ENCODE measurements at regions of chr15 and their contacts with region 1.

Region 1: GRCh38 chr15:34367101-34368081 is at the start of gene LPCAT4:
- DNase-seq: peak; percentile 65
- ATAC-seq: peak; percentile 86
- H3K4me3 ChIP-seq: peak within 1 kb of the TSS; percentile 86
- H3K27ac ChIP-seq: peak within 1 kb of the TSS; percentile 96
- H3K4me1 ChIP-seq: peaks cover 34% of the 10 kb centered on the region
- H3K27me3 ChIP-seq: no peaks in the 10 kb centered on the region
- CTCF ChIP-seq: peak; percentile 89 to 96 (median 95); a peak in 5 of 6 replicates
- EP300 ChIP-seq: no peak
- POLR2A ChIP-seq: peak; percentile 76; the same call in 1 of the 2 replicates
- RAD21 ChIP-seq: peak; percentile 61
- polyA plus RNA-seq, gene LPCAT4: 14.4 to 17.2 TPM

Region 2: GRCh38 chr15:33756961-33757360 is 610.4 kb before region 1 on chr15:
- CTCF ChIA-PET with region 1: no interaction called
- POLR2A ChIA-PET with region 1: no interaction called
- RAD21 ChIA-PET with region 1: no interaction called
- SMC1A ChIA-PET with region 1: no interaction called
- in situ Hi-C with region 1: no loop called
- intact Hi-C with region 1: no loop called
- DNase-seq: no peak
- ATAC-seq: no peak
- H3K4me3 ChIP-seq: no peak overlapping the region
- H3K27ac ChIP-seq: no peak overlapping the region
- H3K4me1 ChIP-seq: no peaks in the 10 kb centered on the region
- H3K27me3 ChIP-seq: no peaks in the 10 kb centered on the region
- CTCF ChIP-seq: no peak
- EP300 ChIP-seq: no peak
- POLR2A ChIP-seq: no peak
- RAD21 ChIP-seq: no peak

Region 3: GRCh38 chr15:34101366-34102175 is 265.8 kb before region 1 on chr15 and contains the starts of genes EMC7 and PGBD4:
- CTCF ChIA-PET with region 1: no interaction called
- POLR2A ChIA-PET with region 1: no interaction called
- RAD21 ChIA-PET with region 1: interaction called, 4 read pairs
- SMC1A ChIA-PET with region 1: interaction called, 3 read pairs
- in situ Hi-C with region 1: no loop called
- intact Hi-C with region 1: loop called (anchors 5 kb)
- DNase-seq: peak; percentile 97
- ATAC-seq: peak; percentile 98
- H3K4me3 ChIP-seq: peak within 1 kb of the TSS; percentile 92
- H3K27ac ChIP-seq: peak within 1 kb of the TSS; percentile 77
- H3K4me1 ChIP-seq: 0 out of 2 replicates have a peak, but pooled peaks cover 4% of the 10 kb centered on the region
- H3K27me3 ChIP-seq: no peaks in the 10 kb centered on the region
- CTCF ChIP-seq: no peak
- EP300 ChIP-seq: peak in 1 of 2 experiments; percentile 10; a peak in 1 of 4 replicates
- POLR2A ChIP-seq: peak; percentile 97
- RAD21 ChIP-seq: no peak
- polyA plus RNA-seq, gene EMC7: 16.5 to 49.3 TPM
- polyA plus RNA-seq, gene PGBD4: 1.2 to 1.6 TPM

Region 4: GRCh38 chr15:34209421-34210282 is 157.7 kb before region 1 on chr15 and contains the start of gene KATNBL1:
- CTCF ChIA-PET with region 1: interaction called, 13 read pairs
- POLR2A ChIA-PET with region 1: interaction called, 5 read pairs
- RAD21 ChIA-PET with region 1: interaction called, 5 read pairs
- SMC1A ChIA-PET with region 1: interaction called, 12 read pairs
- in situ Hi-C with region 1: no loop called
- intact Hi-C with region 1: no loop called
- DNase-seq: peak; percentile 70
- ATAC-seq: peak; percentile 98
- H3K4me3 ChIP-seq: peak within 1 kb of the TSS; percentile 76
- H3K27ac ChIP-seq: peak within 1 kb of the TSS; percentile 53
- H3K4me1 ChIP-seq: 0 out of 2 replicates have a peak, but pooled peaks cover 3% of the 10 kb centered on the region
- H3K27me3 ChIP-seq: no peaks in the 10 kb centered on the region
- CTCF ChIP-seq: peak; percentile 82 to 89 (median 86)
- EP300 ChIP-seq: no peak
- POLR2A ChIP-seq: peak; percentile 88
- RAD21 ChIP-seq: peak; percentile 89
- polyA plus RNA-seq, gene KATNBL1: 7.8 to 11.9 TPM

Region 5: DNA sequence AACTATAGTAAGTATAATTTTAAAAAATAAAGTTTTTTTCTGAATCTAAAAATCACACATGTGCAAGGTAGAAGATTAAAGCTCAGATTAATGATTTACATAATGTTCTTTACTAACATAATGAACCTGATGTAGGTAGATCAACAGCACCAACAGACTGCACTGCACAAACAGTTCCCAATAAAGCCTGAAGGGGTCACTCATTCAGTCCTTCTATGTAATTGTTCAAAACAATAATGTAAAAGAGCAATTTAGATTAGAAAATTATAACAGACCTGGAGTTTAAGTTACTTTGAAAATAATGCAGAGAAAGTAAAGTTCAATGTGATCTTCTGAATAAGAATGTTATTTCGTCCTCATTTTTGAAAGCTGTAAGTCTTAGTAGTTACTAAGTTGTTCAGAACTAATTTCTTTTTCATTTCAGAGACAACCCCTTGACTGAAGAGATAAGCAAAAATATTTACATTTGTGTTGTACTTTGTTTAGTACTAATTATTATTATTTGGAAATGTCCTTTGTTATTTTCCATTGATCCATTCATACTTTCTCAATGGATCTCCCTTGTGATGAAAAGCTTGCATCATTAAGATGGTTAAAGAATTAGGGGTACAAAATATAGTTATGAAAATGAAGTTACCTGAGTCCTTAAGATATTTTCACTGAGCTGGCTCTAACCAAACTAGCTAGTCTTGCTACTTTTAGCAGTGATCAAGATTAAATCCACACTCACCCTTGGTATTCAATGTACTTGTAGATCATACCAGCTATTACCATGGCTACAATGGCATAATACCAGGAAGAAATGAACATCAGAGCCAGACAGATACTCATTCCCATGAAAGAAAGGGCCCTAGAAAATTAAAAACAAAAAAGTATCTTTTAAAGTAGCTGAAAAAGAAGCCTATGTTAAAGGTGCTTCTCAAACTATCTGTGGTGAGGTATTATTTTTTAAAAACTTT is 125.7 kb before region 1 on chr15:
- CTCF ChIA-PET with region 1: interaction called, 66 read pairs
- POLR2A ChIA-PET with region 1: interaction called, 4 read pairs
- RAD21 ChIA-PET with region 1: interaction called, 16 read pairs
- SMC1A ChIA-PET with region 1: interaction called, 22 read pairs
- in situ Hi-C with region 1: no loop called
- intact Hi-C with region 1: loop called (anchors 1 kb)
- DNase-seq: no peak
- ATAC-seq: peak; percentile 89
- H3K4me3 ChIP-seq: no peak overlapping the region
- H3K27ac ChIP-seq: no peak overlapping the region
- H3K4me1 ChIP-seq: peaks cover 5% of the 10 kb centered on the region
- H3K27me3 ChIP-seq: no peaks in the 10 kb centered on the region
- CTCF ChIP-seq: peak; percentile 61 to 70 (median 68)
- EP300 ChIP-seq: no peak
- POLR2A ChIP-seq: no peak
- RAD21 ChIP-seq: peak; percentile 66

Region 6: DNA sequence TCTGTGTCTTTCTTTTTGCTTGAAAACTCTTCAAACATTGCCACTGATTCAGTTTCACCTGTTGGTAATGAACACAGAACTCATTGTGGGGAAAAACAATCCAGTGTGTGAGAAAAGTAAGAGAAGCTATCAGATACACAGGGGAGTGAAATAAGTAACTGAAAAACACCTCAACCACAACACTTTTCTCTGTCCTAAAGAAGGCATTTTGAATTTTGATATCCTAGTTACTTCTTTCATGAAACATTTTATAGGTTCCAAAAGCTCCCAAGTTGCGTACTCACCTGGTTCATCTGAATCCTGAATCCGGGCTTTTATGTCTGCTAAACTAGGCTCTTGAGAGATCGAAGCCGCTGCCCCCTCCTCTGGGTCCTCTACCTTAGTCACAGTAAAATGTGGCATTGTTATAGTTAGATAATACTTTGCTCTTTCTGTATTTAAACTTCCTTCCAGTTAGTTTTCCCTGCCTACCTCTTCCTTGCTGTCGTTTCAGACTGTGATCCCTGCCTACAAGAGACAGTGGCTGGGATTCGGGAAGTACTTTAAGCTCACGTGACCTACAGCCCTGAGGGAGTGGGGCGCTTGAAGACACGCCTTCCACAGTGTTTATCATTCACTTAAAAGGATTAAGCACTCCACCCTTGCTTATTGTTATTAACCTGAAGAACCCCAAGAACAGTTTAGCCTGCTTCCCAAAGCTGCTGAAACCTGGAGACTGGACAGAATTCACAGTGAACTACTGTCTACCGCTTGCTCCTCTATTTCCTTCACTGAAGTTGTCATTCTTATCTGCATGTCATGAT is 48.9 kb before region 1 on chr15:
- CTCF ChIA-PET with region 1: interaction called, 13 read pairs
- POLR2A ChIA-PET with region 1: no interaction called
- RAD21 ChIA-PET with region 1: interaction called, 17 read pairs
- SMC1A ChIA-PET with region 1: interaction called, 7 read pairs
- in situ Hi-C with region 1: no loop called
- intact Hi-C with region 1: no loop called
- DNase-seq: no peak
- ATAC-seq: peak; percentile 84
- H3K4me3 ChIP-seq: peak overlapping the region; percentile 68
- H3K27ac ChIP-seq: peak overlapping the region; percentile 90
- H3K4me1 ChIP-seq: peaks cover 16% of the 10 kb centered on the region
- H3K27me3 ChIP-seq: no peaks in the 10 kb centered on the region
- CTCF ChIP-seq: no peak
- EP300 ChIP-seq: no peak
- POLR2A ChIP-seq: no peak; the same call in 1 of the 2 replicates
- RAD21 ChIP-seq: no peak

Region 7: GRCh38 chr15:34337557-34338306 is 29.7 kb before region 1 on chr15 and contains the start of gene SLC12A6:
- CTCF ChIA-PET with region 1: interaction called, 35 read pairs
- POLR2A ChIA-PET with region 1: interaction called, 13 read pairs
- RAD21 ChIA-PET with region 1: interaction called, 37 read pairs
- SMC1A ChIA-PET with region 1: interaction called, 30 read pairs
- in situ Hi-C with region 1: no loop called
- intact Hi-C with region 1: no loop called
- DNase-seq: no peak
- ATAC-seq: peak; percentile 81
- H3K4me3 ChIP-seq: peak within 1 kb of the TSS; percentile 72
- H3K27ac ChIP-seq: peak within 1 kb of the TSS; percentile 94
- H3K4me1 ChIP-seq: peaks cover 14% of the 10 kb centered on the region
- H3K27me3 ChIP-seq: no peaks in the 10 kb centered on the region
- CTCF ChIP-seq: no peak
- EP300 ChIP-seq: no peak
- POLR2A ChIP-seq: peak; percentile 74
- RAD21 ChIP-seq: no peak
- polyA plus RNA-seq, gene SLC12A6: 4.7 to 4.8 TPM

Region 8: DNA sequence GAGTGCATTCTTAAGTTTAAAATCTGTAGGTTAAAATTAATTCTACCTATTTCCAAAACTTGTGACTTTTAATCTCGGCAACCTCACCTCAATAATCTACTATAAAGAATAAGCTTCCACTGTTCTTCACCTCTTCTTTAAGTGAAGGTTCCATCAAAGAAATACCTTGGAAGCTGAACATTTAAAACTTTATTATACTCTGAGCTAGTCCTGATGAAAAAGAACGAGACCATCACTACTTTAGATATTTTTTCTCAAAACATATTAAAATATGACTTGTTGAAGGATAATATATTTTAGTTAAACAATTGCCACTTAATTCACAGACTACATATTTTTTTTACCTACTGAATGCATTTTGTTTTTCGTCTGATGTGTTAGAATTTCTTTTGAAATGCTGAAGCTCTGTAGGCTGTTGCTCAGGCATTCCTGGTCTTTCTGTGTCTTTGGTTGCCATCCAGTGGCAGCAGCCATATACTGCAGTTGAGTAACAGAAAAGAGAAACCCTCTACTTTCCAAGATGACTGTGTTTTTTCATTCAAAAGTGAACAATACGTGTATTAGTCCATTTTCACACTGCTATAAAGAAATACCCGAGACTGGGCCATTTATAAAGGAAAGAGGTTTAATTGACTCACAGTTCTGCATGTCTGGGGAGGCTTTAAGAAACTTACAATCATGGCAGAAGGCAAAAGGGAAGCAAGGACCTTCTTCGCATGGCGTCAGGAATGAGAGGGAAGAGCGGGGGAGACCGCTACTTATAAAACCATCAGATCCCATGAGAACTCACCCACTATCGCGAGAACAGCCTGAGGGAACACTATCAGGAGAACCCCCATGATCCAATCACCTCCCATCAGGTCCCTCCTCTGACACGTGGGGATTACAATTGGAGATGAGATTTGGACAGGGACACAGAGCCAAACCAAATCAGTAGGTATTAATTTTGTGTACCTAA is 220.6 kb after region 1 on chr15:
- CTCF ChIA-PET with region 1: interaction called, 3 read pairs
- POLR2A ChIA-PET with region 1: no interaction called
- RAD21 ChIA-PET with region 1: interaction called, 9 read pairs
- SMC1A ChIA-PET with region 1: interaction called, 6 read pairs
- in situ Hi-C with region 1: no loop called
- intact Hi-C with region 1: loop called (anchors 1 kb)
- DNase-seq: no peak
- ATAC-seq: peak; percentile 41
- H3K4me3 ChIP-seq: peak overlapping the region; percentile 21; the same call in 1 of the 2 replicates
- H3K27ac ChIP-seq: no peak overlapping the region
- H3K4me1 ChIP-seq: no peaks in the 10 kb centered on the region
- H3K27me3 ChIP-seq: no peaks in the 10 kb centered on the region
- CTCF ChIP-seq: peak; percentile 67 to 88 (median 76)
- EP300 ChIP-seq: no peak
- POLR2A ChIP-seq: peak; percentile 56
- RAD21 ChIP-seq: peak; percentile 93

Region 9: DNA sequence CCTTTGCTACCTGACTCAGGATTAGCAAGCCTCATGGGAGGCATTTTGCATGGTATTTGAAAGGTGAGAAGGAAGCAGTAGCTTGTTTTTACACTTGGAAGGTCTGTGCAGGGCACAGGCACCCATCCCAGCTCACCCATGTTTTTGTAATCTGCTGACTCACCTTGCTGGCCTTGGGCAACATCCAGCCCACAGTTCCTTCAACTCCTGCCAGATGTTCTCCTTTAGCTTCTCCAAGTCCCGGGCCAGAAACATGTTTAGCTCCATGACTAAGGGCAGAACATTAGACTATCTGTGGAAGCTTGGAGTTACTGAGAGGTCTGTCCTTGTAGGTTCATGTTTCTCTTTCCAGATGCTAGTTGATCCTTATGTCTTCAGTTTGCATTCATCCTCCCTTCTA is 633.1 kb after region 1 on chr15:
- CTCF ChIA-PET with region 1: no interaction called
- POLR2A ChIA-PET with region 1: no interaction called
- RAD21 ChIA-PET with region 1: no interaction called
- SMC1A ChIA-PET with region 1: no interaction called
- in situ Hi-C with region 1: no loop called
- intact Hi-C with region 1: no loop called
- DNase-seq: no peak
- ATAC-seq: no peak
- H3K4me3 ChIP-seq: no peak overlapping the region
- H3K27ac ChIP-seq: no peak overlapping the region
- H3K4me1 ChIP-seq: no peaks in the 10 kb centered on the region
- H3K27me3 ChIP-seq: no peaks in the 10 kb centered on the region
- CTCF ChIP-seq: no peak
- EP300 ChIP-seq: no peak
- POLR2A ChIP-seq: no peak
- RAD21 ChIP-seq: no peak